Gastrocnemius medialis (tissue), 4 donors: ENCODE measurements at regions of chr2 and their contacts with region 1.

Region 1: GRCh38 chr2:227163998-227164762 is at the starts of genes COL4A3 and COL4A4:
- DNase-seq: peak; percentile 72 to 76
- ATAC-seq: peak; percentile 81 to 84
- H3K4me3 ChIP-seq: peak within 1 kb of the TSS; percentile 70 to 81 (median 72)
- H3K27ac ChIP-seq: peak within 1 kb of the TSS; percentile 86 to 99 (median 93)
- H3K4me1 ChIP-seq: peaks cover 33 to 65% of the 10 kb centered on the region in 2 donors
- H3K27me3 ChIP-seq: no peaks in the 10 kb centered on the region
- CTCF ChIP-seq: no peak
- POLR2A ChIP-seq: peak; percentile 42 to 72
- total RNA-seq, gene COL4A3: 1.9 to 66.8 (median 3.8) TPM
- total RNA-seq, gene COL4A4: 2.0 to 11.4 (median 5.7) TPM

Region 2: GRCh38 chr2:227228061-227228667 is 64.0 kb after region 1 on chr2:
- in situ Hi-C with region 1: no loop called
- intact Hi-C with region 1: loop called (anchors 1 kb)
- DNase-seq: peak; percentile 96 to 98
- ATAC-seq: peak; percentile 93 to 97
- H3K4me3 ChIP-seq: peak overlapping the region in 1 of 4 donors; percentile 9
- H3K27ac ChIP-seq: peak overlapping the region; percentile 80 to 91 (median 86)
- H3K4me1 ChIP-seq: peaks cover 11 to 15% of the 10 kb centered on the region in 2 donors
- H3K27me3 ChIP-seq: no peaks in the 10 kb centered on the region
- CTCF ChIP-seq: no peak
- POLR2A ChIP-seq: peak in 1 of 2 donors; percentile 32